ENCODE measurements at regions of chr7 and their contacts with region 1.

Region 1: DNA sequence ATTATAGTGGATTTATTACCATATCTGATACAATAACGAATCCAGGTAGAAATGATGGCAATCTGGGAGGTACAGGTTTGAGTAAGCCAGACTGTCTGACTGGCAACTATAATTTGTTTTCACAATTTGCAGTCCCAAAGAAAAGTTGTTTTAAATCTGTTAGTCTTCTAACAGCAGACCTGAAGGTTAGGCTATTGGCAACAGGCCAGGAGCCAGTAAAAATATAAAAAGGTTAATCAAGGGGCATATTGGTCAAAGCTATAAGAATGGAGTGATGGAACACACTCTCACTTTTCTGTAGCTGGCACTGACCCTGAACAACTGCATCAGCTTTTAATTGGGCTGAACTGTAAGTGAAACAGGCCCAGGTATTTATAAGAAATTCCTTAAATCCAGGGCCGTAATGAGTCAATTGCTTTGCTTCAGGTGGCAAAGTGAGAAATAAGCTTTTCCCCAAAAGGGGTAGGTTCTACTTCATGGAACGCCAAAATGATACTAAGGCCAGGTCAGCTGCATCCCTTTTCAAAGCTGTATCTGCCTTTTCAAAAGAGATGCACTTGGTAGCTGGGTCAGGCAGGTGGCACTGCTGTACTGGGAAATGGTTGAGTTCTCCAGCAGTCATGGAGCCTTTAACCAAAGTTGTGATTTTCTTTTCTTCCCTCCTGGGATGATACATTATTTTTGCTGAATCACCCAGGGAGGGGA is 7.0 kb upstream of the GPR22 start:
- DNase-seq: peak; percentile 58
- ATAC-seq: peak; percentile 92

Region 2: GRCh38 chr7:106660862-106661720 is 801.8 kb before region 1 on chr7 and contains the start of gene CCDC71L:
- intact Hi-C with region 1: no loop called
- DNase-seq: peak; percentile 97
- ATAC-seq: peak; percentile 97
- total RNA-seq, gene CCDC71L: 6.4 TPM

Region 3: DNA sequence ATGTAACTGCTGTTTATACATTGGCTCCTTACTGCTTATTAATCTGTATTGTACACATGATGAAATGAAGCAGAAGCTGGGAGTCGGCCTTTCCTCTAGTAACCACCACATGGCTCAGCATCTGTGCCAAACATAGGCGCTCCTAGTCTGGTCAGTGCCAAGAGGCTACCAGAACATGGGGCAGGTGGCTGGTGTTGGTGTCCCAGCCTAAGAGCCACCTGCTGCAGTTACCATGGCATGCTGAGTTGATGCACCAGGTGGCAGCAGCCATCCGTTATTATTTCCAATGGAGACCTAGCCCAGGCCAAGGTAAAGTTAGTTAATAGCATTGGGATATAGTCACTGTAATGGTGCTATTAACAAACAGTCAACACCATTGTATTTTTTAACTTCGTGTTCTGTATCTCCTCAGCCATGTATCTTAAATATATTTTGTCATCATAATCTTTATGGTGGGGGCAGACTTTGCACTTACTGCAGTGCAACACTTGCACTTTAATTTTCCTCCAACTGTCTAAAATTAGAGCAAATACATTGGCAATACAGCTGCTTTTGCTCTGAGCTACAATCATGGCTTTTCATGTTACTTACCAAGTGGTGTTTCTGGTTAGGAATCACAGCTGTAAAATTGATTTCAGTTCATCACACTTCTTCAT is 261.0 kb before region 1 on chr7:
- intact Hi-C with region 1: loop called (anchors 10 kb)
- DNase-seq: peak; percentile 72
- ATAC-seq: peak; percentile 92

Region 4: GRCh38 chr7:107725151-107725740 is 262.4 kb after region 1 on chr7:
- intact Hi-C with region 1: loop called (anchors 2 kb)
- DNase-seq: no peak
- ATAC-seq: no peak